GM12878 (cell line): ENCODE measurements at regions of chr13 and their contacts with region 1.

Region 1: DNA sequence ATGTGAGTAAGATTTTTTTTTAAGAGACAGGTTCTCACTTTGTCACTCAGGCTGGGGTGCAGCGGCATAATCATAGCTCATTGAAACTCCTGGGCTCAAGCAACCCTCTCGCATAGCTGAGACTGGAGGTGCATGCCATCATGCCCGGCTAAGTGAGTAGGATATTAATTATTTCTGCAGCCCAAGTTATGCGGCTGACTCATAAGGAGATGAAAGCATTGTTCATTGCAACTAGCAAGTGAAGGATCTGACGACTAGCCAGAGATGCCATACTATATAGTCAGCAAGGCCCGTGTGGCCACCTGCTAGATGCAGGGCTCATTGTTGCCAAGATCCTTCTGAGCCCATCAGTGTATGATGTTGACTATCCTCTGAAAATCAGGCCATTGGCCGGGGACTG is 45.2 kb downstream of the ABCC4 start:
- DNase-seq: no peak
- ATAC-seq: no peak
- H3K4me3 ChIP-seq: no peak overlapping the region
- H3K27ac ChIP-seq: 0 out of 2 replicates have a peak overlapping the region, but pooled peaks have one; percentile 22
- H3K4me1 ChIP-seq: peaks cover 64% of the 10 kb centered on the region
- H3K27me3 ChIP-seq: no peaks in the 10 kb centered on the region
- CTCF ChIP-seq: no peak
- EP300 ChIP-seq: no peak
- POLR2A ChIP-seq: no peak
- RAD21 ChIP-seq: no peak

Region 2: GRCh38 chr13:94157705-94158218 is 1098.3 kb before region 1 on chr13:
- CTCF ChIA-PET with region 1: no interaction called
- POLR2A ChIA-PET with region 1: no interaction called
- RAD21 ChIA-PET with region 1: no interaction called
- SMC1A ChIA-PET with region 1: no interaction called
- in situ Hi-C with region 1: no loop called
- intact Hi-C with region 1: no loop called
- DNase-seq: no peak
- ATAC-seq: no peak
- H3K4me3 ChIP-seq: no peak overlapping the region
- H3K27ac ChIP-seq: no peak overlapping the region
- H3K4me1 ChIP-seq: no peaks in the 10 kb centered on the region
- H3K27me3 ChIP-seq: no peaks in the 10 kb centered on the region
- CTCF ChIP-seq: no peak
- EP300 ChIP-seq: no peak
- POLR2A ChIP-seq: no peak
- RAD21 ChIP-seq: no peak

Region 3: DNA sequence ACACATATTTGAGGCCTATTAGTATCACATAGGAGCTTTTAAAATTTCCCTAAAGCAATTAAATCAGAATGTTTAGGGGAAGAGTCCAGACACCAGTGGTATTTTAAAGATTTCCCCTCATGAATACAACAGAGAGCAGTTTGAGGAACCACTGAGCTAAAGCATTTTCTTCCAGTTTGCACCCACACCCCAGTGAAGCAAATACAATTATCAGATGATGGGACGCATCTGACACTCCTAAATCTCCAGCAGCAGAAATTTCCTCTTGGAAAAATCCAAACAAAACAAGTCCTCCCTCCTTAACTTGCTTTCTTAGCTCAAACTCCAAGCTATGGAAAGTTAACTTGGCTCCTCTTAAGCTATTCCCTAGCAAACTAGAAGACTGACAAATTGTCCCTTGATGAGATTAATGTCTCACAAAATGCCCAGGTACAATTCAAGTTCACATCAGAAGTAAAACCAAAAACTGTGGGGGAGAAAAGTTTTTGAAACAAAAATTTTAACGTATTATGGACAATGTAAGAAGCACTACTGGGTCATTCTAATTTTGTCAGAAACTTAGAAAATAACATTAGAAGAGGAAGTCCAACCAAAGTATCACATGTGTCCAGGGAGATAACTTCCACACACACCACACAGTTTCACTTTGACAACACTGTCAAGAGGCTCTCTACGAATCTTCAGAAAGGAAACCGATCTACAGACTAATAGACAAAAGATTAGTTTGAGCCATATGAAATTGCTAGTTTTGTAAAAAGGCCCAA is 29.0 kb before region 1 on chr13:
- CTCF ChIA-PET with region 1: interaction called, 12 read pairs
- POLR2A ChIA-PET with region 1: interaction called, 39 read pairs
- RAD21 ChIA-PET with region 1: interaction called, 88 read pairs
- SMC1A ChIA-PET with region 1: interaction called, 109 read pairs
- in situ Hi-C with region 1: no loop called
- intact Hi-C with region 1: loop called (anchors 1 kb)
- DNase-seq: peak; percentile 88
- ATAC-seq: peak; percentile 88
- H3K4me3 ChIP-seq: peak overlapping the region; percentile 49; the same call in 1 of the 2 replicates
- H3K27ac ChIP-seq: peak overlapping the region; percentile 98
- H3K4me1 ChIP-seq: peaks cover 37% of the 10 kb centered on the region
- H3K27me3 ChIP-seq: no peaks in the 10 kb centered on the region
- CTCF ChIP-seq: no peak
- EP300 ChIP-seq: peak; percentile 51 to 57
- POLR2A ChIP-seq: no peak
- RAD21 ChIP-seq: no peak

Region 4: GRCh38 chr13:95239283-95239682 is 16.8 kb before region 1 on chr13:
- CTCF ChIA-PET with region 1: interaction called, 14 read pairs
- POLR2A ChIA-PET with region 1: interaction called, 7 read pairs
- RAD21 ChIA-PET with region 1: interaction called, 23 read pairs
- SMC1A ChIA-PET with region 1: interaction called, 40 read pairs
- in situ Hi-C with region 1: no loop called
- intact Hi-C with region 1: no loop called
- DNase-seq: no peak
- ATAC-seq: peak; percentile 78
- H3K4me3 ChIP-seq: 0 out of 2 replicates have a peak overlapping the region, but pooled peaks have one; percentile 16
- H3K27ac ChIP-seq: peak overlapping the region; percentile 4
- H3K4me1 ChIP-seq: peaks cover 32% of the 10 kb centered on the region
- H3K27me3 ChIP-seq: no peaks in the 10 kb centered on the region
- CTCF ChIP-seq: no peak
- EP300 ChIP-seq: no peak
- POLR2A ChIP-seq: no peak
- RAD21 ChIP-seq: no peak

Region 5: GRCh38 chr13:95275322-95276036 is 19.4 kb after region 1 on chr13:
- CTCF ChIA-PET with region 1: interaction called, 5 read pairs
- POLR2A ChIA-PET with region 1: interaction called, 11 read pairs
- RAD21 ChIA-PET with region 1: interaction called, 14 read pairs
- SMC1A ChIA-PET with region 1: interaction called, 8 read pairs
- in situ Hi-C with region 1: no loop called
- intact Hi-C with region 1: no loop called
- DNase-seq: no peak
- ATAC-seq: no peak
- H3K4me3 ChIP-seq: no peak overlapping the region
- H3K27ac ChIP-seq: peak overlapping the region; percentile 29; the same call in 1 of the 2 replicates
- H3K4me1 ChIP-seq: peaks cover 20% of the 10 kb centered on the region
- H3K27me3 ChIP-seq: no peaks in the 10 kb centered on the region
- CTCF ChIP-seq: no peak
- EP300 ChIP-seq: no peak
- POLR2A ChIP-seq: no peak
- RAD21 ChIP-seq: no peak

Region 6: GRCh38 chr13:95378603-95379002 is 122.5 kb after region 1 on chr13:
- CTCF ChIA-PET with region 1: interaction called, 7 read pairs
- POLR2A ChIA-PET with region 1: no interaction called
- RAD21 ChIA-PET with region 1: interaction called, 6 read pairs
- SMC1A ChIA-PET with region 1: interaction called, 11 read pairs
- in situ Hi-C with region 1: no loop called
- intact Hi-C with region 1: loop called (anchors 5 kb)
- DNase-seq: no peak
- ATAC-seq: no peak
- H3K4me3 ChIP-seq: no peak overlapping the region
- H3K27ac ChIP-seq: no peak overlapping the region
- H3K4me1 ChIP-seq: peaks cover 16% of the 10 kb centered on the region
- H3K27me3 ChIP-seq: no peaks in the 10 kb centered on the region
- CTCF ChIP-seq: no peak
- EP300 ChIP-seq: no peak
- POLR2A ChIP-seq: no peak
- RAD21 ChIP-seq: no peak